Dendritic cell treated with granulocyte-macrophage colony-stimulating factor and Interleukin-4, amounts not matched to agents 40 ng/mL and 50 ng/mL, for 4 days (primary cell): ENCODE measurements at regions of chr4 and their contacts with region 1.

Region 1: DNA sequence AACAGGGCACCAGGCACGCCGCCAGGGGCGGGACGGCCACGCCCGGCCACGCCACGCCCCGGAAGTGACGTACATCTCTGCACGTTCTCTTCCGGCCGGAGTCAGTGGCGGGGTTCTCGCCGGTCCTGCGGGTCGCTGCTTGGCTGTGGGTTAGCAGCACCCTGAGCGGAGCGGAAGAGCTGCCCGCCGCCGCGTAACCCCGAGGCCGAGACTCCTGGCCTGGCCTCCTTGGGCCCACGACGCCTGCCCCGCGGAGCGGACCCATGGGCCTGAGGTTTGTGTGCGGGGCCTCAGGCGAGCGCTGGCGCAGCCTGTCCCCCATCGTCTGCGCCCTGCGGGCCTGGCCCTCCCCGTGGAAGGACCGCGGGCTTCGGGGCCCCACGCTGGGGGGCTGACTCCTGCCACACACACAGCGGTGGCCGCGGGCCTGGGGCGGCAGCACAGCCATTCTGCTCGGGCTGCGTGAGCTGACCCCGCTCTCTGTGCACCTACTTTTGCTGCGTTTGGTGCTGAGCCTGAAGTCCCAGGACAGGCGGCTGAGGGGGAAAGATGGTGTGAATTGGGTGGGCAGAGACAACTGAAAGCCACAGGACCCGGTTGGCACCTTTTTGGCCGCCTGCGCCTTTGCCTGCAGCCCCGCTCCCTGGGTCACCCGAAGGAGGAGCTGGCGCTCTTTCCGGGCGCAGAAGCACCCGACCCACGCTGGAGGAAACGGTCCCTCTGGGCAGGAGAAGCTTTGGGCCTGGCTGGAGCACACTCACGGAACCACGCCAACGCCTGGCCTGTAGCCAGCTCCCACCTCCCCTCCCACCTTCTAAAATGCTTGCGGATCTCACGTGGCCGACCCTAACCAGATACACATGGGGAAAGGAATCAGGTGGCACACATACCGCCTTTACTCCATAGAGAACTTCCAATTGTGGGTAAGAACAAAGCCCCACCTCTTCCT is 28.1 kb downstream of the NOP14 start:
- H3K4me3 Mint-ChIP-seq: peak overlapping the region; percentile 70
- H3K27ac Mint-ChIP-seq: peak overlapping the region; percentile 82
- H3K4me1 Mint-ChIP-seq: peaks cover 55% of the 10 kb centered on the region
- H3K27me3 Mint-ChIP-seq: no peaks in the 10 kb centered on the region

Region 2: GRCh38 chr4:2755837-2756694 is 179.0 kb before region 1 on chr4 and contains the start of gene TNIP2:
- intact Hi-C with region 1: loop called (anchors 5 kb)
- H3K4me3 Mint-ChIP-seq: peak within 1 kb of the TSS; percentile 68
- H3K27ac Mint-ChIP-seq: peak within 1 kb of the TSS; percentile 92
- H3K4me1 Mint-ChIP-seq: peaks cover 57% of the 10 kb centered on the region
- H3K27me3 Mint-ChIP-seq: peaks cover 5% of the 10 kb centered on the region

Region 3: DNA sequence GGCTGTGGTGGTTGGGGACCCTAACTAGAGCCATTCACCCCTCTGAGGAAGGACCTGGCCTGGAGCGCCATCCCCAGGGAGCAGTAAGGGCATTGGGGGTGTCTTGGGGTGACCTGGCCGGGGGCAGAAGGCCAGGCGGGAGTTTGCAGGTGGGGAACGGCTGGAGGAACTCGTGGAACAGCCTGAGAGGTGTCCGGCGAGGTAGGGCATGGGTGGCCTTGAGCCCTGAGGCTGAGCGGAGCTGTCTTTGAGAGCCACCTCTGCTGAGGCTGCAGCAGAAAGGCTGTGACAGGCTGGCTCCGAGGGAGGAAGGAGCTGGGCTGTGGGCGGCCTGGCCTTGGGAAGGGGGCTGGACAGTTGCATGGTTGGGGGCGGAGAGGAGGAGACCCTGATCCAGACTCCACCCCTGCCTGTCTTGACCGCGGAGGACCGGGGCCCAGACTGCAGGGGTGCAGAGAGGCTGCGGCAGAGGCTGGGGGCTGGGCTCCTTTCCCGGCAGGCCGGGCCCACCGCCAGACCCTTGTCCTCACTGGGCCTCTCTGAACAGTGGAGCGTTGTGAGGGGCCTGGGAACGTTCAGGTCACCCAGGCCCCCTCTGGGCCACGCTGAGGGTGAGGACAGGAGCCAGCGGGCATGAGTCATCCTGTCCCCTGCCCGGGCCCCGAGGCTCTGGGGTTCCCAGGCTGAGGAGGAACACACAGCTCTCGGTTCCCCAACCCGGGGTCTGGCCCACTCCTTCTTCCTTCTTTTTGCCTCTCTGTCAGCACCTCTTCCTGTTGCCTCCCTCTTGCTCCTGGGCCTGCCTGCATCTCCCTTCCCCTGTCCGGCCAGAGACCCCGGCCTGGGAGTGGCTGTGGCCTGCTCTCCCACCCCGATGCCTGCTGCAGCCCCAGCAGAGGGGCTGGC is 134.1 kb before region 1 on chr4:
- intact Hi-C with region 1: loop called (anchors 5 kb)
- H3K4me3 Mint-ChIP-seq: peak overlapping the region; percentile 86
- H3K27ac Mint-ChIP-seq: peak overlapping the region; percentile 94
- H3K4me1 Mint-ChIP-seq: peaks cover 96% of the 10 kb centered on the region
- H3K27me3 Mint-ChIP-seq: no peaks in the 10 kb centered on the region

Region 4: GRCh38 chr4:2843263-2843940 is 91.7 kb before region 1 on chr4 and contains the start of gene ADD1:
- intact Hi-C with region 1: loop called (anchors 10 kb)
- H3K4me3 Mint-ChIP-seq: peak within 1 kb of the TSS; percentile 89
- H3K27ac Mint-ChIP-seq: peak within 1 kb of the TSS; percentile 93
- H3K4me1 Mint-ChIP-seq: peaks cover 60% of the 10 kb centered on the region
- H3K27me3 Mint-ChIP-seq: no peaks in the 10 kb centered on the region

Region 5: DNA sequence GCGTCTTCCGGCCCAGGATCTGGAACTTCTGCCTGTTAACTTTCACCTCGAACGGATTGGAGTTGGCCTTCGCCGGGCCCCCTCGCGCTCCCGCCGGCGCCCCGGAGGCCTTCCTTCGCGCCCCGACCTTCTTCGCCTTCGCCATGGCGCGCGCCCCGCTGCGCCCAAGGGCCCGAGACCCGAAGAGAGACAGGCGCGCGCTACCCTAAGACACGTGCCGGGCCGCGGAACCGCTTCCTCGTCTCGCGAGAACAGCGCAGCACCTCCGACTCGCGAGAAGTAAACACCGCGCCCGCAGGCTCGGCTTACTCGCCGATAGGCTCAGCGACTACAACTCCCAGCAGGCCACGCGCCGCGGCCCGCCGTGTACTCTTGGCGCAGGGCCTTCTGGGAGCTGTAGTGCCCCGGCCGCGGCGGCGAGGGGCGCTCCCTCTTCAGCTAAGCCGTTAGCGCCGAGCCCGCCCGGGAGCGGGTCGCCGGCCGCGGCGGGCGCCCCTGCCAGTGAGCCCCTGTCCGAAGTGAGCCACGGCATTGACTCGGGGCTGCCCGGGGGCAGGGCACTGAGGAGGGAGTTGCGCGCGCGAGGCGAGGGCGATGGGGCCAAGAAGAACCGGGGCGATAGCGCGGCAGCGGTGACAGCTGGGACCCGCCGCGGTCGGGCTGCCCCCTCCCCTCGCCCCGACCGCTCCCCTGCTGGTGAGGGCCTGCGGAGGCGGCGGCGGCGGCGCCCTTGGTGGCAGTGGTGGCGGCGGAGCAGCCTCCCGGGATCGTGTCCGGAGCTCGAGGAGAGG is 28.3 kb after region 1 on chr4 and contains the starts of genes GRK4 and NOP14:
- intact Hi-C with region 1: loop called (anchors 1 kb)
- H3K4me3 Mint-ChIP-seq: peak within 1 kb of the TSS; percentile 93
- H3K27ac Mint-ChIP-seq: peak within 1 kb of the TSS; percentile 94
- H3K4me1 Mint-ChIP-seq: peaks cover 39% of the 10 kb centered on the region
- H3K27me3 Mint-ChIP-seq: peaks cover 4% of the 10 kb centered on the region

Region 6: GRCh38 chr4:3201718-3202702 is 266.9 kb after region 1 on chr4:
- intact Hi-C with region 1: no loop called
- H3K4me3 Mint-ChIP-seq: no peak overlapping the region
- H3K27ac Mint-ChIP-seq: peak overlapping the region; percentile 39
- H3K4me1 Mint-ChIP-seq: peaks cover 28% of the 10 kb centered on the region
- H3K27me3 Mint-ChIP-seq: no peaks in the 10 kb centered on the region